ENCODE measurements at regions of chr3 and their contacts with region 1.

Region 1: GRCh38 chr3:66220602-66221377 is at the start of gene SLC25A26:
- DNase-seq: peak; percentile 95
- H3K4me3 Mint-ChIP-seq: peak within 1 kb of the TSS; percentile 76
- H3K27ac Mint-ChIP-seq: peak within 1 kb of the TSS; percentile 40
- H3K4me1 Mint-ChIP-seq: peaks cover 14% of the 10 kb centered on the region
- H3K27me3 Mint-ChIP-seq: no peaks in the 10 kb centered on the region
- CTCF ChIP-seq: no peak
- total RNA-seq, gene SLC25A26: 15.3 and 15.8 TPM in 2 replicates

Region 2: GRCh38 chr3:66239513-66240123 is 18.8 kb after region 1 on chr3:
- CTCF ChIA-PET with region 1: interaction called, 10 read pairs
- intact Hi-C with region 1: no loop called
- DNase-seq: no peak
- H3K4me3 Mint-ChIP-seq: no peak overlapping the region
- H3K27ac Mint-ChIP-seq: no peak overlapping the region
- H3K4me1 Mint-ChIP-seq: no peaks in the 10 kb centered on the region
- H3K27me3 Mint-ChIP-seq: no peaks in the 10 kb centered on the region
- CTCF ChIP-seq: no peak